RWPE1 (cell line): ENCODE measurements at regions of chr2 and their contacts with region 1.

Region 1: GRCh38 chr2:240435457-240435947 is at the start of gene GPC1:
- DNase-seq: peak; percentile 84
- H3K27ac ChIP-seq: peak within 1 kb of the TSS; percentile 100
- CTCF ChIP-seq: no peak

Region 2: GRCh38 chr2:240135706-240136012 is 299.8 kb before region 1 on chr2:
- CTCF ChIA-PET with region 1: no interaction called
- POLR2A ChIA-PET with region 1: interaction called, 14 read pairs
- DNase-seq: no peak
- H3K27ac ChIP-seq: peak overlapping the region; percentile 64
- CTCF ChIP-seq: no peak

Region 3: DNA sequence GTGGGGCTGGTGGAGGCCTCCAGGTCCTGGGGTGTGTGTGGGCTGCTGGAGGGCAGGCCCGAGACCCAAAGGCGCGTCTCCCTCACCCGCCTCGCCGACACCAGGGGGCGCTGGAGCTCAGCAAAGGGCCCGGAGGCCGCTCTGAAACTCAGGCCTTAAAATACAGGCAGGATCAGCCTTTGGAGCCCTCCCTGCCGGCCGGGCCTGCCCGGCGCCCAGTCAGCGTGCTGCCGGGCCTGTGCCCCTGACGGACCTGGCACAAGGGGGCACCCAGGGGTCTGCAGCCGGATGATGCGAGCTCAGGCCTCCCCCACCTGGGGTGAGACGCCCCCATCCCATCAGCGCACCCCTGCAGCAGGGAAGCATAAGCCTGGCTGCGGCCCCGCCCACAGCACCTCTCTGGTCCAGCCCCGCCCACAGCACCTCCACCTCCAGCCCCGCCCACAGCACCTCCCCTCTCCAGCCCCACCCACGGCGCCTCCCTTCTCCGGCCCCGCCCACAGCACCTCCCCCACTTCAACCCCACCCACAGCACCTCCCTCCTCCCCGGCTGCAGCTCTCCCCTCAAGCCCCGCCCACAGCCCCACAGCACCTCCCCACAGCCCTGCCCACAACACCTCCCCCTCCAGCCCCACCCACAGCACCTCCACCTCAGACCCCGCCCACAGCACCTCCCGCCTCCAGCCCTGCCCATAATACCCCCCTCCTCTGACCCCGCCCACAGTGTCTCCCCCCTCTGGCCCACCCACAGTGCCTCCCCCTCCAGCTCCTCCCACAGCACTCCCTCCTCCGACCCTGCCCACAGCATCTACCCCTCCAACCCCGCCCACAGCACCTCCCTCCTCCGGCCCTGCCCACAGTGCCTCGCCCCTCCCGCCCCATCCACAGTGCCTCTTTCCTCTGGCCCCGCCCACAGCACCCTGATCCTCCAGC is 202.3 kb before region 1 on chr2:
- CTCF ChIA-PET with region 1: interaction called, 17 read pairs
- POLR2A ChIA-PET with region 1: no interaction called
- DNase-seq: peak; percentile 98
- H3K27ac ChIP-seq: peak overlapping the region; percentile 71
- CTCF ChIP-seq: peak; percentile 84